ENCODE measurements at regions of chr11 and their contacts with region 1.

Region 1: DNA sequence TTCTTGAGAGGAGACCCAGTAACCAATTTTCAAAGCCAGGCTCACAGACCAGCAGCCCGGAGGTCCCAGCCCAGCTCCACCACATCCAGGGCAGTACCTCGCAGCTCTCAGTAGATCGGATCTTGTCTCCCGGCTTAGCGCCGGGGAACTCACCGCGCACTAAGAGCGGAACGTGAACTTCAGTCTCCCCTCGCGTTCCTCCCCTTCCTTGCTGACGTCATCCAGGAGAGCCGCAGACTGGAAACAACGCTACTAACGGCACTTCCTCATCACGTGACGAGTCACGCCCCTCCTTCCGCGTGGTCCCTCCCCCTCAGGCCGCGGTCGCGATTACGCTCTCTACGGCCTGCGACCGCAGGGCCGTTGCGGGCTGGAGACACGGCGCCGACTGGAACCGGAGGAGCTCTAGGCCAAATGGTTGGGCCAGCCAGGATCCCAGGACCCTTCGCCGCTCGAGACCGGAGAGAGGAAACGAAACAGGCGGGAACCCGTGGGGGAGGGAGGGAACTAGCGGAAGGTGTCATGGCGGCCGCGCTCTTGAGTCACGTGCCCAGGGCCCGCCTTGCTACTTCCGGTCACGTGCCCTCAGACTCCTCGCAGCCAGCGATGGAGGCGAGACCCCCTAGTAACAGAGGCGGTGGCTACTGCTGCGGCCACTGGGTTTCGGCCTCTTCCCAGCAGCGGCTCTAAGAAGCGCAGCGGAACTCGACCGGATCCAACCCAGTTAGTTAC is at the starts of genes GTF2H1 and HPS5:
- DNase-seq: peak; percentile 95 to 97 (median 97)
- ATAC-seq: peak; percentile 96 to 99 (median 98)
- H3K4me3 ChIP-seq: peak within 1 kb of the TSS; percentile 52 to 93 (median 82)
- H3K27ac ChIP-seq: peak within 1 kb of the TSS; percentile 85 to 100 (median 95)
- H3K4me1 ChIP-seq: peaks cover 0 to 57% (median 35%) of the 10 kb centered on the region in 12 donors
- H3K27me3 ChIP-seq: no peaks in the 10 kb centered on the region
- CTCF ChIP-seq: no peak
- POLR2A ChIP-seq: peak in 1 of 2 donors; percentile 81
- total RNA-seq, gene GTF2H1: 19.8 to 37.2 (median 25.4) TPM
- total RNA-seq, gene HPS5: 6.4 to 19.3 (median 12.5) TPM

Region 2: GRCh38 chr11:18145025-18145424 is 177.1 kb before region 1 on chr11:
- intact Hi-C with region 1: no loop called
- DNase-seq: no peak
- ATAC-seq: no peak
- H3K4me3 ChIP-seq: no peak overlapping the region
- H3K27ac ChIP-seq: no peak overlapping the region
- H3K4me1 ChIP-seq: no peaks in the 10 kb centered on the region
- H3K27me3 ChIP-seq: peaks cover 0 to 19% (median 0%) of the 10 kb centered on the region in 9 donors
- CTCF ChIP-seq: peak in 2 of 12 donors; percentile 14 to 17
- POLR2A ChIP-seq: no peak

Region 3: GRCh38 chr11:18347471-18348125 is 25.5 kb after region 1 on chr11:
- intact Hi-C with region 1: no loop called
- DNase-seq: no peak
- ATAC-seq: no peak
- H3K4me3 ChIP-seq: no peak overlapping the region
- H3K27ac ChIP-seq: no peak overlapping the region
- H3K4me1 ChIP-seq: no peaks in the 10 kb centered on the region
- H3K27me3 ChIP-seq: no peaks in the 10 kb centered on the region
- CTCF ChIP-seq: no peak
- POLR2A ChIP-seq: no peak

Region 4: GRCh38 chr11:18383388-18384156 is 61.4 kb after region 1 on chr11:
- intact Hi-C with region 1: loop called in 1 of 10 experiments (anchors 5 kb)
- DNase-seq: peak; percentile 57 to 92 (median 75)
- ATAC-seq: peak; percentile 83 to 96 (median 91)
- H3K4me3 ChIP-seq: peak overlapping the region in 3 of 12 donors; percentile 4 to 32 (median 6)
- H3K27ac ChIP-seq: peak overlapping the region; percentile 90 to 100 (median 96)
- H3K4me1 ChIP-seq: peaks cover 0 to 32% (median 21%) of the 10 kb centered on the region in 12 donors
- H3K27me3 ChIP-seq: no peaks in the 10 kb centered on the region
- CTCF ChIP-seq: no peak
- POLR2A ChIP-seq: peak in 1 of 2 donors; percentile 37

Region 5: GRCh38 chr11:18395735-18396504 is 73.8 kb after region 1 on chr11:
- intact Hi-C with region 1: loop called in 9 of 10 experiments (anchors 1 to 10 kb)
- DNase-seq: peak; percentile 98 to 100 (median 99)
- ATAC-seq: peak; percentile 88 to 97 (median 94)
- H3K4me3 ChIP-seq: peak overlapping the region; percentile 61 to 98 (median 86)
- H3K27ac ChIP-seq: peak overlapping the region; percentile 84 to 99 (median 96)
- H3K4me1 ChIP-seq: peaks cover 2 to 28% (median 12%) of the 10 kb centered on the region in 12 donors
- H3K27me3 ChIP-seq: no peaks in the 10 kb centered on the region
- CTCF ChIP-seq: no peak
- POLR2A ChIP-seq: peak in 1 of 2 donors; percentile 79

Region 6: DNA sequence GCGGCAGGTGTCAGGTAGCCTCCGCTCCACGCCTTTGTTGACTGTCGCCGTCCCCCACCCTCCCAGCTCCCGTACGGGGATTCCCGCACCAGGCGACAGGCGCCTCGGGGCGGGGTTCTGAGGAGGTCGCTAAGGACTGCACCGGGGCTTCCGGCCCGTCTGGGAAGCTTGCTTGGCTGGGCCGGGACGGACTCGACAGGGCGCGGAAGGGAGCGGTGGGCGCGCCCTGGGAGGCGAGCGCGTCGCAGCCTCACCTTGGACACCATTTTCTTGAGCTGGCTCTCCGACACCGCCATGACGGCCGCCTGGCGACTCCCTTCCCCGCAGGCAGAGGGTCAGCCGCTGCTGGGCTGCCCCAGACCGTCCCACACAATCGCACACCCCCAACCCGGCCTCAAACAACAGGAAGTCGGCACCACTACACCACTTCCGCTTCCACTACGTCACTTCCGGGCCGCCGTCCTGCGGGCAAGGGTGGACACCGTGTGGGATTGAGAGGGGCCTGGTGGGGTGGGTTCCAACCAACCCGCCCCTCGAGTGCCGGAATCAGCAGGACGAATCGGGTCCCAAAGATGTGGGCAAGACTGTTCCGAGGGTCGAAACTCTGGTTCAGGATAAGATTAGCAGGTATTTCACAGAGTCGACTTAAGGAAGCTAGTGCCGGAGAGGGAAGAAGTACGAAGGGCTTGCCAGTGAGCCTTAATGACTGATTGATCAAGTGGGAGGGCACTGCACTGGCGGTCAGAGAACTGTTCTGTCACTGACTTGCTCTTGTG is 204.6 kb after region 1 on chr11 and contains the start of gene TSG101:
- intact Hi-C with region 1: loop called in 5 of 10 experiments (anchors 5 to 10 kb)
- DNase-seq: peak; percentile 94 to 97 (median 97)
- ATAC-seq: peak; percentile 99
- H3K4me3 ChIP-seq: peak within 1 kb of the TSS; percentile 48 to 96 (median 90)
- H3K27ac ChIP-seq: peak within 1 kb of the TSS; percentile 83 to 98 (median 94)
- H3K4me1 ChIP-seq: peaks cover 0 to 39% (median 16%) of the 10 kb centered on the region in 12 donors
- H3K27me3 ChIP-seq: no peaks in the 10 kb centered on the region
- CTCF ChIP-seq: no peak
- POLR2A ChIP-seq: peak; percentile 7 to 87
- total RNA-seq, gene TSG101: 58.6 to 156 (median 69.1) TPM

Region 7: GRCh38 chr11:18698341-18699268 is 376.5 kb after region 1 on chr11 and contains the start of gene TMEM86A:
- intact Hi-C with region 1: loop called in 1 of 10 experiments (anchors 5 kb)
- DNase-seq: peak; percentile 94 to 98 (median 95)
- ATAC-seq: peak; percentile 79 to 96 (median 91)
- H3K4me3 ChIP-seq: peak within 1 kb of the TSS; percentile 64 to 97 (median 86)
- H3K27ac ChIP-seq: peak within 1 kb of the TSS; percentile 38 to 97 (median 87)
- H3K4me1 ChIP-seq: peaks cover 0 to 37% (median 21%) of the 10 kb centered on the region in 12 donors
- H3K27me3 ChIP-seq: no peaks in the 10 kb centered on the region
- CTCF ChIP-seq: no peak
- POLR2A ChIP-seq: peak; percentile 84 to 87
- total RNA-seq, gene TMEM86A: 2.3 to 13.1 (median 4.9) TPM